Caco-2 (cell line): ENCODE measurements at regions of chr1 and their contacts with region 1.

Region 1: DNA sequence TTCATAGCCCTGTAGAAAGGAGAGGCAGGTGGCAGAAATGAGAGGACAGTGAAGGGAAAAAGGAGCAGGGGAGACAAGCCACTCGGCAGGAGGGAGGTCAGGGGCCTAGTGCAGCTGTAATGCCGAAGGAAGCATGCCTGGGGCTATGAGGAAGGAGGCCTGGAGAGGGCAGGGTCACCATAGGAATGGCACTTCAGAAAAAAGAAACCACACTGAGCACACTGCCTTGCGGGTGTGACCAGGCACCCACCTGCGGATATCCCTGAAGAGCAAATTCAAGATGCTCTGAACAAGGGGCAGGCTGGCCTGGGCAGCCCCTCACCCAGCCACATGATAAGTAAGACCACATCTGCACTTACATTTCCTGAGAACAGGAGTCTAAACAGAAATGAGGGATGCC is 104.7 kb downstream of the JAK1 start:
- DNase-seq: peak; percentile 60 to 64
- H3K4me3 ChIP-seq: no peak overlapping the region
- H3K4me3 Mint-ChIP-seq: no peak overlapping the region
- H3K27ac Mint-ChIP-seq: no peak overlapping the region
- H3K4me1 ChIP-seq: no peaks in the 10 kb centered on the region
- H3K4me1 Mint-ChIP-seq: peaks cover 7% of the 10 kb centered on the region
- H3K27me3 ChIP-seq: no peaks in the 10 kb centered on the region
- H3K27me3 Mint-ChIP-seq: no peaks in the 10 kb centered on the region
- CTCF ChIP-seq: peak in 1 of 2 experiments; percentile 47

Region 2: DNA sequence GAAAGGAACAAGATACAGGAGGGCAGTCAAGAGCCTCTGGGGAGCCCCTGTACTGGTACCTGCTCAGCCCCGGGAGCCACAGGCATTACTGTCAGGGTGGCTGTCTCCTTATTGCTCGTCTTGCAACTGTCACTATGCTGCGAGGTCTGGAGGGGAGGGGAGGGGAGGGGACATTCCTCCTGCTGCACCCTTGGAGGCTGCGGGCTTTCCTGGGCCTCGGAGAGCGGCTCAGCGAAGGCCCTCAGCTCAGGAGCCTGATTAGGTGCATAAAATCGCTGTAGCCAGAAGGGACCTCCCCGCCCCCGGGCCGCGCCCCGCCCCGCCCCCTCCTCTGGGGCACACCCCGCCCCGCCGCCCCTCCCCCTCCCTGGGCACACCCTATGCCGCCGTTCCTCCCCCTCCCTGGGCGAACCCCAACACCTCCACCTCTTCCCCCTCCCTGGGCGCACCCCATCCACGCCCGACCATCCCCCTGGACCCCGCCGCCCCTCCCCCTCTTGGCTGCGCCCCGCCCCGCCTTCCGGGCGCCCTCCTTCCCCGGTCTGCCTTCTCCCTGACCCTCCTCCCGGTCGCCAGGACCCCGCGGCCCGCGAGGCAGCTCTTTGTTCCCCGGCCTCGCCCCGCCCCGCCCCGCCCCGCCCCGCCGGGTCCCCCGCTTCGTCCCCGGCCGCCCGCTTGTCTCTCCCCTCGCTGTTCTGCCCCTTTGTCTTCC is 356.2 kb before region 1 on chr1:
- CTCF ChIA-PET with region 1: no interaction called
- POLR2A ChIA-PET with region 1: no interaction called
- intact Hi-C with region 1: no loop called
- DNase-seq: peak; percentile 35 to 53
- H3K4me3 ChIP-seq: peak overlapping the region; percentile 30
- H3K4me3 Mint-ChIP-seq: peak overlapping the region; percentile 87
- H3K27ac Mint-ChIP-seq: peak overlapping the region; percentile 72
- H3K4me1 ChIP-seq: 0 out of 2 replicates have a peak, but pooled peaks cover 6% of the 10 kb centered on the region
- H3K4me1 Mint-ChIP-seq: peaks cover 7% of the 10 kb centered on the region
- H3K27me3 ChIP-seq: no peaks in the 10 kb centered on the region
- H3K27me3 Mint-ChIP-seq: no peaks in the 10 kb centered on the region
- CTCF ChIP-seq: no peak

Region 3: GRCh38 chr1:64898107-64898845 is 36.7 kb after region 1 on chr1:
- CTCF ChIA-PET with region 1: interaction called, 3 read pairs
- POLR2A ChIA-PET with region 1: no interaction called
- intact Hi-C with region 1: loop called (anchors 1 kb)
- DNase-seq: peak; percentile 67 to 78
- H3K4me3 ChIP-seq: no peak overlapping the region
- H3K4me3 Mint-ChIP-seq: no peak overlapping the region
- H3K27ac Mint-ChIP-seq: peak overlapping the region; percentile 52
- H3K4me1 ChIP-seq: peaks cover 49% of the 10 kb centered on the region
- H3K4me1 Mint-ChIP-seq: peaks cover 32% of the 10 kb centered on the region
- H3K27me3 ChIP-seq: no peaks in the 10 kb centered on the region
- H3K27me3 Mint-ChIP-seq: no peaks in the 10 kb centered on the region
- CTCF ChIP-seq: no peak

Region 4: GRCh38 chr1:64909031-64909430 is 47.4 kb after region 1 on chr1:
- CTCF ChIA-PET with region 1: no interaction called
- POLR2A ChIA-PET with region 1: no interaction called
- intact Hi-C with region 1: no loop called
- DNase-seq: no peak
- H3K4me3 ChIP-seq: no peak overlapping the region
- H3K4me3 Mint-ChIP-seq: no peak overlapping the region
- H3K27ac Mint-ChIP-seq: no peak overlapping the region
- H3K4me1 ChIP-seq: peaks cover 19% of the 10 kb centered on the region; the same call in 1 of the 2 replicates
- H3K4me1 Mint-ChIP-seq: peaks cover 29% of the 10 kb centered on the region
- H3K27me3 ChIP-seq: no peaks in the 10 kb centered on the region
- H3K27me3 Mint-ChIP-seq: no peaks in the 10 kb centered on the region
- CTCF ChIP-seq: no peak

Region 5: GRCh38 chr1:65002508-65003315 is 141.1 kb after region 1 on chr1:
- CTCF ChIA-PET with region 1: no interaction called
- POLR2A ChIA-PET with region 1: no interaction called
- intact Hi-C with region 1: loop called (anchors 1 kb)
- DNase-seq: peak; percentile 55 to 70
- H3K4me3 ChIP-seq: peak overlapping the region; percentile 60
- H3K4me3 Mint-ChIP-seq: peak overlapping the region; percentile 75
- H3K27ac Mint-ChIP-seq: peak overlapping the region; percentile 60
- H3K4me1 ChIP-seq: peaks cover 10% of the 10 kb centered on the region; the same call in 1 of the 2 replicates
- H3K4me1 Mint-ChIP-seq: peaks cover 7% of the 10 kb centered on the region
- H3K27me3 ChIP-seq: no peaks in the 10 kb centered on the region
- H3K27me3 Mint-ChIP-seq: no peaks in the 10 kb centered on the region
- CTCF ChIP-seq: no peak

Region 6: DNA sequence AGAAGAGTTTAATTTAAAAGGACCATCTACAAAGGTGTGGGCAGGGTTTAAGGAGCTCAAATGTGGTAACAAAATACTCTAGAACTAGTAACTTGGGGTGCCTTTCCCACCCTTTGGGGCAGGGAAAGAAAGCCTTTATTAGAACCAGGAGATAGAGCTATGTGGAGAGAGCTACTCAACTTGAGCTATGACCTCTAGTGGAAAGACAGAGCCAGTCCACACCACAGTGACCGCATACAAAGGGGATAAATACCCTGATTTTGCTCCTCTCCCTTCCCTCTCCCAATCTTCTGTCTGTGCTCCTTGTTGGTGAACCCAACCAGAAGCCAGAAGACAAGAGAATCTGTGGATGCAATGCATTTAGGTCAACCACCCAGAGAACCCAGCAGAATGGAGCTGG is 159.2 kb after region 1 on chr1:
- CTCF ChIA-PET with region 1: interaction called, 12 read pairs
- POLR2A ChIA-PET with region 1: no interaction called
- intact Hi-C with region 1: loop called (anchors 1 kb)
- DNase-seq: peak in 1 of 2 experiments; percentile 13
- H3K4me3 ChIP-seq: no peak overlapping the region
- H3K4me3 Mint-ChIP-seq: no peak overlapping the region
- H3K27ac Mint-ChIP-seq: no peak overlapping the region
- H3K4me1 ChIP-seq: 0 out of 2 replicates have a peak, but pooled peaks cover 1% of the 10 kb centered on the region
- H3K4me1 Mint-ChIP-seq: no peaks in the 10 kb centered on the region
- H3K27me3 ChIP-seq: no peaks in the 10 kb centered on the region
- H3K27me3 Mint-ChIP-seq: no peaks in the 10 kb centered on the region
- CTCF ChIP-seq: peak in 1 of 2 experiments; percentile 49

Region 7: DNA sequence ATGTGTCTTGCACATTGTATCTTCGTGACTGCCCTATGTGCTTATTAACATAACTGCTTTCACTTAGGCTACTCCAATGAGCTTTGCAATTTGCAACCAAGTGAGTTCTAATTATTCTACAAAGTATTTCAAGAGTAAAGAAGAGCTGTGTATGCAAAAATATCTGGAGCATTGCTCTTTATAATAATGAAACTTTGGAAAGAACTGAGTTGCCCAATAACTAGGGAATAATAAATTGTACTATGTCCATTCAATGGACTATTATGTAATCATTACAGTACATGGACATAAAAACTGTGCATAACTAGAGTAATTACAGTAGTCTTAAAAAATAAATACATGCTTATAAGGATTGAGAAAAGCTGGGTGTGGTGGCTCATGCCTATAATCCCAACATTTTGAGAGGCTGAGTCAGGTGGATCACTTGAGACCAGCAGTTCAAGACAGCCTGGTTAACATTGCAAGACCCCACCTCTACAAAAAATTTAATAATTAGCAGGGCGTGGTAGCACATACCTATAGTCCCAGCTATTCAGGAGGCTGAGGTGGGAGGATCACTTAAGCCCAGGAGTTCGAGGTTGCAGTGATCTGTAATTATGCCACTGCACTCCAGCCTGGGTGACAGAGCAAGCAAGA is 175.1 kb after region 1 on chr1:
- CTCF ChIA-PET with region 1: no interaction called
- POLR2A ChIA-PET with region 1: no interaction called
- intact Hi-C with region 1: loop called (anchors 1 kb)
- DNase-seq: no peak
- H3K4me3 ChIP-seq: no peak overlapping the region
- H3K4me3 Mint-ChIP-seq: no peak overlapping the region
- H3K27ac Mint-ChIP-seq: no peak overlapping the region
- H3K4me1 ChIP-seq: no peaks in the 10 kb centered on the region
- H3K4me1 Mint-ChIP-seq: no peaks in the 10 kb centered on the region
- H3K27me3 ChIP-seq: no peaks in the 10 kb centered on the region
- H3K27me3 Mint-ChIP-seq: no peaks in the 10 kb centered on the region
- CTCF ChIP-seq: no peak

Region 8: DNA sequence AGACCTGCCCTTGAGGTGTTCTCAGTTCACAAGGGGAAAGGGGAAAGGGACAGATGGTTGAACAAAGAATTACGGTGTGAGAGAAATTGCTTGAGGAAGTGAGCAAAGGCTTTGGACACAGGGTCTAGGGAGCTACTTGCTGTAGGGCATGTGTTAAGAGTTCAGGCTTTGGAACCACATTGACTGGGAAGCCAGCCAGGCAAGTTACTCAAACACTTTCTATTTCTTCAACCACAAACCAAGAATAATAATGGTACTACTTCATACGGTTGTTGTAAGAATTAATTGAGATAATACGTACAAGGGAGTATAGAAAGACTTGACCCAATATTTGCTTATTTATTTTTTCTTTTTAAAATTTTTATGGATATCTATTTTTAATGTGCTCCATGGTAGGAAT is 313.0 kb after region 1 on chr1:
- CTCF ChIA-PET with region 1: no interaction called
- POLR2A ChIA-PET with region 1: no interaction called
- intact Hi-C with region 1: no loop called
- DNase-seq: no peak
- H3K4me3 ChIP-seq: no peak overlapping the region
- H3K4me3 Mint-ChIP-seq: no peak overlapping the region
- H3K27ac Mint-ChIP-seq: no peak overlapping the region
- H3K4me1 ChIP-seq: peaks cover 38% of the 10 kb centered on the region
- H3K4me1 Mint-ChIP-seq: peaks cover 36% of the 10 kb centered on the region
- H3K27me3 ChIP-seq: no peaks in the 10 kb centered on the region
- H3K27me3 Mint-ChIP-seq: no peaks in the 10 kb centered on the region
- CTCF ChIP-seq: no peak

Region 9: GRCh38 chr1:65265651-65266351 is 404.2 kb after region 1 on chr1:
- CTCF ChIA-PET with region 1: no interaction called
- POLR2A ChIA-PET with region 1: no interaction called
- intact Hi-C with region 1: no loop called
- DNase-seq: peak; percentile 58 to 64
- H3K4me3 ChIP-seq: peak overlapping the region; percentile 34
- H3K4me3 Mint-ChIP-seq: peak overlapping the region; percentile 64
- H3K27ac Mint-ChIP-seq: no peak overlapping the region
- H3K4me1 ChIP-seq: no peaks in the 10 kb centered on the region
- H3K4me1 Mint-ChIP-seq: no peaks in the 10 kb centered on the region
- H3K27me3 ChIP-seq: no peaks in the 10 kb centered on the region
- H3K27me3 Mint-ChIP-seq: no peaks in the 10 kb centered on the region
- CTCF ChIP-seq: peak; percentile 34 to 38